ENCODE measurements at regions of chr15 and their contacts with region 1.

Region 1: DNA sequence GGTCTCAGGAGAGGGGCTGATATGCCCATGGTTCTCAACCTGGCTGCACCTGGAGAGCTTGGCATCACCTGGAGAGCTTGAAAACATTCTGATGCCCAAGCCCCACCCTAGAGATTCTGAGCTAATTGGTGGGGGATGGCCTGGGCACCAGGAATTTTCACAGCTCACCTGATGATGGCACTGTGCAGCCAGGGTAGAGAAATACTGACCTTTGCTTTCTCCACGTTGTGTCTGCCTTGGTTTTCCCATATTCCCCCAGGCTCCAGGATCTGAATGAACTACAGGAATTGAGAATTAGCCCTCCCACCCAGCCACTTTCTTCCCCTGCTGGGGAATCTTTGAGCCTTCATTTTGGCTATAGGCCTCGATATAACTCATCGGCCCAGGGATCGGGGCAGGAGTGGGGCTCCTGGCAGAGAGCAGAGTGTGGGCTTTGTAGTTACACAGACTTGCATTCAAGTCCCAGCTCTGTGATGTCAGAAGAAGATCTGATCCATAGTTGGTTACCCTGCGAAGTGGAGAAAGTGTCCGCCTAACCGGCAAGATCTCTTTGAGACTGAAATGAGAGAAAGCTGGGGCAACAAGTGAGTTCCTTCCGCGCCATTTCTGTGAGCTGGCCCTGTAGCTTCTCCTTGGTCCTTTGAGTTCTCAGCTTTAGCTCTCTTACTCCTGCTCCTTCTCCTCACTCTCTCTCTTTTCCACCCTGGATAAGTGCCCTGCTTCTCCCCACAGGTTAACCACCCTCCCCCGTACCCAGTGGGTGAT is 33.1 kb upstream of the UBE2Q2 start:
- DNase-seq: peak; percentile 57 to 66
- H3K4me3 ChIP-seq: no peak overlapping the region
- H3K4me3 Mint-ChIP-seq: no peak overlapping the region
- H3K27ac Mint-ChIP-seq: no peak overlapping the region
- H3K4me1 ChIP-seq: no peaks in the 10 kb centered on the region; the same call in 1 of the 2 replicates
- H3K4me1 Mint-ChIP-seq: peaks cover 8% of the 10 kb centered on the region
- H3K27me3 ChIP-seq: no peaks in the 10 kb centered on the region
- H3K27me3 Mint-ChIP-seq: peaks cover 3% of the 10 kb centered on the region
- CTCF ChIP-seq: peak; percentile 58 to 72

Region 2: DNA sequence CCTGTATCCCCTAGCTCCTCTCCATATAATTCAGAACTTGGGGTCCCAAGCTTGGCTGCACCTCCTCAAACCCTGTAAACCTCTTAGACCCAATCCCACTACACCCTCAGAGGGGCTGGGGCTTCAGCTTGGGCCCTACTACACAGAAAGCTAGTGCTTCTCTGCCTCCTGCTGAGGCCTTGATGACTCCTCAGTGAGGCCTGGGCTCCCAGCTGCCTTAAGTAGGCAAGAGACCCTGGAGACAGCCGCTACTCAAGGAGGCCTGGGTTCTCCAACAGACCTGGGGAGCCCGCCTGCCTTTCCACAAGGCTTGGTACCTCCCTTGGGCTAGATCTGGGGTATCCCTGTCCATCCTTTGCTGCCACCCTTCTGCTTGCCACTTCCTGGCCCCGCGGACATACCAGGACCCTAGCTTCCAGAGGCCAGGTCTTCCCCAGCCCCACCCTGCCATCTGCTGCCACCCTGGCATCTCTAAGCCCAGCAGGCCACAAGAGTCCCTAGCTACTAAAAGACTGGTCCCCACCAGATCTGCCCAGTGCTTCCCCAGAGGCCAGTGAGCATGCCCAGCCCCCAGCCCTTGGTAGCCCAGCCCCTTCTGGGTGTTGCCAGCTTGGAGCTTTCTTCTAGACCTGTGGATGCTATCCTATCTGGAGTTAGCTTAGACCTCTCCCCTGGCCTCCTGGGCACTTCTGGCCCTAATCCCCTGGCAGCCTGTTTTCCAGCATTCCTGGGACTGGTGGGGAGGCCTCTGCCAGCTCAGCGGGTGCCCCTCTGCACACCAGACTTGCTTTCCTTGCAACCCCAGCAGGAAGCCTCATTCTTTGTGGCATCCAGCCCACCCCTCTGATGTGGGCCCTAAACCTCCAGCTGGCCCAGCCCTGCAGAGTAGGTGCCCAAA is 594.8 kb before region 1 on chr15:
- CTCF ChIA-PET with region 1: no interaction called
- POLR2A ChIA-PET with region 1: no interaction called
- intact Hi-C with region 1: no loop called
- DNase-seq: peak in 1 of 2 experiments; percentile 38
- H3K4me3 ChIP-seq: no peak overlapping the region
- H3K4me3 Mint-ChIP-seq: no peak overlapping the region
- H3K27ac Mint-ChIP-seq: peak overlapping the region; percentile 0
- H3K4me1 ChIP-seq: no peaks in the 10 kb centered on the region
- H3K4me1 Mint-ChIP-seq: no peaks in the 10 kb centered on the region
- H3K27me3 ChIP-seq: no peaks in the 10 kb centered on the region
- H3K27me3 Mint-ChIP-seq: no peaks in the 10 kb centered on the region
- CTCF ChIP-seq: no peak

Region 3: DNA sequence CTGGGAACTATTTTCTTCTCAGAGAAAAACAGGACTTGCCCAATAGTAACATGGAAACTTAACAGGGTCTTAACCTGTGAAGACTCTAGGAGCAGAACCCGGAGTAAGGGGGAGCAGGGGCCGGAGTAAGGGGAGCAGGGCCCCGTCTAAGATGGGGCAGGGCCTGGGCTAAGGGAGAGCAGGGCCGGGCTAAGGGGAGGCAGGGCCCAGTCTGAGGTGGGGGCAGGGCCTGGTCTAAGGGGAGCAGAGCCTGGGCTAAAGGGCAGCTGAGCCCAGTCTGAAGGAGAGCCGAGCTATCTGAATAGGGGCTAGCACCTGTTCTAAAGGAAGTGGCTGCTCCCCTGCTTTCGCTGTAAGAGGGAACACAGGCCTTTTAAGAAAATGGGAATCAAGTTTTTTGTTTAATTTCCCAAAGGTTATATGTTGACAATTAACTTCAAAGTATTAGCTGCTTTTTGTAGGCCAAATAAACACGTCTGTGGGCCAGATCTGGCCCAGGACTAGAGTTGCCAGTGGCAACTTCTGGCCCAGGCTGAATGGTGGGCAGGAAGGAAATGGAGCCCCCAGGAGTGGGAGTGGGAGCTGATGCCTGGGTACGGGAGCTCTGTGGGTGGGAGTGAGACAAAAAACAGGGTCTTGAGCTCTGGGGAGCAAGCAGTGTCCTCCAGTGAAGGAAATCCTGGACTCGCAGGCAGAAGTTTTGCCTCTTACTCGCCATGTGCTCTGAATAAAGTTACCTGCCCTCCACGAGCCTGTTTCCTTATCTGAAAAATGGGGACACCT is 130.0 kb before region 1 on chr15:
- CTCF ChIA-PET with region 1: no interaction called
- POLR2A ChIA-PET with region 1: no interaction called
- intact Hi-C with region 1: no loop called
- DNase-seq: no peak
- H3K4me3 ChIP-seq: no peak overlapping the region
- H3K4me3 Mint-ChIP-seq: no peak overlapping the region
- H3K27ac Mint-ChIP-seq: peak overlapping the region; percentile 31
- H3K4me1 ChIP-seq: 0 out of 2 replicates have a peak, but pooled peaks cover 6% of the 10 kb centered on the region
- H3K4me1 Mint-ChIP-seq: peaks cover 16% of the 10 kb centered on the region
- H3K27me3 ChIP-seq: no peaks in the 10 kb centered on the region
- H3K27me3 Mint-ChIP-seq: no peaks in the 10 kb centered on the region
- CTCF ChIP-seq: no peak

Region 4: DNA sequence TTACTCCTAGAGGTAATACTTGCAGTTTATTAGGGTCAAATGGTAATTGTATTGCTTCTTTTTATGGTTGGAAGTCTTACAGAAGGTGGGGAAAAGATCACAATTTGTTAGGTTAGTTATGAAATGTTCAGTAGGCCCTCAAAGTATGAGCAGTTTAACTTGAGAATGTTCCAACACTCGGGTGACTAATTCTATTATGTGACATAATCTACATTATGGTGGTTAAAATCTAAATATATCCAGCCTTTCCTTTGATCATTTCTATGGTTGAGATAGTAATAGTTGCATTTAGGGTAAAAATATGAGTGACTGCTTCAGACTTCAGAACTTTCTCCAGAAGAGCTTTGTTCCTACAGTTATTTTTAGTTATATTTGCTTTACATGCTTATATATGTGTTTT is 73.9 kb after region 1 on chr15:
- CTCF ChIA-PET with region 1: interaction called, 4 read pairs
- POLR2A ChIA-PET with region 1: no interaction called
- intact Hi-C with region 1: loop called (anchors 1 kb)
- DNase-seq: no peak
- H3K4me3 ChIP-seq: no peak overlapping the region
- H3K4me3 Mint-ChIP-seq: no peak overlapping the region
- H3K27ac Mint-ChIP-seq: no peak overlapping the region
- H3K4me1 ChIP-seq: peaks cover 27% of the 10 kb centered on the region
- H3K4me1 Mint-ChIP-seq: peaks cover 11% of the 10 kb centered on the region
- H3K27me3 ChIP-seq: no peaks in the 10 kb centered on the region
- H3K27me3 Mint-ChIP-seq: no peaks in the 10 kb centered on the region
- CTCF ChIP-seq: no peak

Region 5: DNA sequence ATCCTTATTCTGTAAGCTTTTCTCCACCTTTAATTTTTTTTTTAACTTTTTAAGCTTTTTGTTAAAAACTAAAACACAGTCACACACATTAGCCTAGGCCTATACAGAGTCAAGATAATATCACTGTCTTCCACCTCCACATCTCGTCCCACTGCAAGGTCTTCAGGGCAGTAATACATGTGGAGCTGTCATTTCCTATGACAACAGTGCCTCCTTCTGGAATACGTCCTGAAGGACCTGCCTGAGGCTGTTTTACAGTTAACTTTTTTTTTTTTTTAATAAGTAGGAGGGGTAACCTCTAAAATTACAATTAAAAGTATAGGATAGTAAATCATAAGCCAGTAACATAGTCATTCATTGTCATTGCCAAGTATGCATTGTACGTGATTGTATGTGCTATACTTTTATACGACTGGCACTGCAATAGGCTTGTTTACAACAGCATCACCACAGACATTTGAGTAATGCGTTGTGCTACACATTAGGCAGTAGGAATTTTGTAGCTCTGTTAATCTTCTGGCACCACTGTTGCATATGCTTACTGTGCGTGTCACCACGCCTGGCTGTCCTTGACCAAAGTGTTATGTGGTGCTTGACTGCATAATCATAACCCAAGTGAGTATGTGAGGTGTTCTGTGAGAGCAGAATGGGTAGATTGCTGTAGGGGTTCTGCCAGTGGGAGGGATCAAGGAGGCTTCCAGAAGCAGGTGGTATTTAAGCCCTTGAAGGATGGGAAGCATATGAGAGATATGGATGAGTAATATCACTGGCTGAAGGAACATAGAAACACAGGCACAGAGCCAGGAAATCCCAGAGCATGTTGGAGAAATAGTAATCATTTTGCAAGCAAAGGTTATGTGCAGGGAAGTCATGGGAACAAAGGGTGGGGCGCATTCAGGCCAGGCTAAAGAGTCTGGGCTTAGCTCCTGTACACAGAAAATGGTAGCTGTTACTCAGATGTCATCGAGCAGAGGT is 111.8 kb after region 1 on chr15:
- CTCF ChIA-PET with region 1: interaction called, 13 read pairs
- POLR2A ChIA-PET with region 1: no interaction called
- intact Hi-C with region 1: loop called (anchors 1 kb)
- DNase-seq: peak; percentile 44 to 62
- H3K4me3 ChIP-seq: no peak overlapping the region
- H3K4me3 Mint-ChIP-seq: no peak overlapping the region
- H3K27ac Mint-ChIP-seq: no peak overlapping the region
- H3K4me1 ChIP-seq: peaks cover 16% of the 10 kb centered on the region; the same call in 1 of the 2 replicates
- H3K4me1 Mint-ChIP-seq: peaks cover 15% of the 10 kb centered on the region
- H3K27me3 ChIP-seq: no peaks in the 10 kb centered on the region
- H3K27me3 Mint-ChIP-seq: no peaks in the 10 kb centered on the region
- CTCF ChIP-seq: peak; percentile 42 to 59

Region 6: DNA sequence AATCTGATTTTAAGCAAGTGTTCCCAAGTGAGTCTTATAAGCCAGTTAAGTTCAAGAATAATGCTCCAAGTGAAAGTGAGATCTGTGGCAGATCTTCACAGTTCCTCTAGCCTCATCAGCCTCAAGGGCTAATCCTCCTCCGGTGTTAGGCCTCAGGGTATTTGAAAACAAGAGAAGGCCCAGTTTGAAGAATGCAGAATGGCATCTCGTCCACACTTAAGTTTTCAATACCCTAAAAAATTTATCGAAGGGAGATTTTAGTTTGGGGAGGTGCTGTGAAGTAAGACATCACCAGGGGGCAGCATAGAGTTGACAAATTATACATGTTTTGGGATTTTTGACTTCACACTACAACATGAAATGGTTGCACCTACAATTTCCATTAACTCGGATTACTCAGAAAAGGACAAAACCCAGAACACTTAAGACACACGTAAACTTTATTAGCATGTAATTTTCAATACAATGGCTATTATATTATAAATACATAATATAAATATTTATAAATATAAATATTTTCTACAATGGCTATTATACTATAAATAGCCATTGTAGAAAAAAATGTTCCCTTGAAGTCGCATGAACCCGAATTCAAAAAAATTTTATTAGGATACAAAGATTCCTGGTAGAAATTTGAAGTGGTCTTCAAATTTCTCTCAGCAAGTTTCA is 247.3 kb after region 1 on chr15:
- CTCF ChIA-PET with region 1: interaction called, 4 read pairs
- POLR2A ChIA-PET with region 1: no interaction called
- intact Hi-C with region 1: loop called (anchors 1 kb)
- DNase-seq: peak in 1 of 2 experiments; percentile 46
- H3K4me3 ChIP-seq: no peak overlapping the region
- H3K4me3 Mint-ChIP-seq: peak overlapping the region; percentile 41
- H3K27ac Mint-ChIP-seq: no peak overlapping the region
- H3K4me1 ChIP-seq: peaks cover 4% of the 10 kb centered on the region; the same call in 1 of the 2 replicates
- H3K4me1 Mint-ChIP-seq: peaks cover 8% of the 10 kb centered on the region
- H3K27me3 ChIP-seq: no peaks in the 10 kb centered on the region
- H3K27me3 Mint-ChIP-seq: peaks cover 7% of the 10 kb centered on the region
- CTCF ChIP-seq: peak; percentile 76 to 82